Endothelial cell of umbilical vein (primary cell): ENCODE measurements at regions of chr2 and their contacts with region 1.

Region 1: GRCh38 chr2:172131713-172132555 is 29.2 kb upstream of the DLX2 start:
- DNase-seq: no peak
- H3K4me3 ChIP-seq: no peak overlapping the region
- H3K27ac ChIP-seq: no peak overlapping the region
- H3K4me1 ChIP-seq: no peaks in the 10 kb centered on the region
- H3K27me3 ChIP-seq: peaks cover 3% of the 10 kb centered on the region in 2 experiments
- CTCF ChIP-seq: no peak
- POLR2A ChIP-seq: no peak

Region 2: DNA sequence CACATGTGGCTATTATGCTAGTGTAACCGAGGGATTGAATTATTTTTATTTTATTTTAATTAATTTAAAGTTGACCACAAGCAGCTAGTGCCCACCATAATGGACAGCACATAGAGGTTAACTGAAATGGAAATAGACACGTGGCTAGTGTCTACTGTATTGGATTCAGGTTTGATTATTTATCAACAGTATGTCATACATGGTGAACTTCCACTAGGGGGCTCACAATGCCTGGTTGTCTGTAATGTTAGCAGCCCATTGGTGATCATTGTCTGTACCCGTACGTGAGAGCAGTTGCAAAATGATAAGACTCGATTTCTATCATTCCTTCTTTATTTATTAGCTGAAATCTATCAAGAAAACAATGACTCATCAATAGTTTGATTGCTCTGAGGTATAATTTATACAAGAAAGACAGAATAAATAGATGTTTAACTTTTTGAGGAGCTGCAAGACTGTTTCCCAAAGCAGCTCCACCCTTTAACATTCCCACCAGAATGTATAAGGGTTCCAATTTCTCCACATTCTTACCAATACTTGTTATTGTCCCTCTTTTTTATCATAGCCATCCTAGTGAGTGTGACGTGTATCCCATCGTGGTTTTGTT is 533.1 kb before region 1 on chr2:
- CTCF ChIA-PET with region 1: interaction called, 40 read pairs
- POLR2A ChIA-PET with region 1: no interaction called
- dilution Hi-C with region 1: no loop called
- intact Hi-C with region 1: loop called (anchors 1 kb)
- DNase-seq: peak; percentile 58
- H3K4me3 ChIP-seq: no peak overlapping the region
- H3K27ac ChIP-seq: no peak overlapping the region
- H3K4me1 ChIP-seq: no peaks in the 10 kb centered on the region
- H3K27me3 ChIP-seq: peaks cover 9 to 12% of the 10 kb centered on the region in 2 experiments
- CTCF ChIP-seq: peak; percentile 67 to 70
- POLR2A ChIP-seq: no peak

Region 3: DNA sequence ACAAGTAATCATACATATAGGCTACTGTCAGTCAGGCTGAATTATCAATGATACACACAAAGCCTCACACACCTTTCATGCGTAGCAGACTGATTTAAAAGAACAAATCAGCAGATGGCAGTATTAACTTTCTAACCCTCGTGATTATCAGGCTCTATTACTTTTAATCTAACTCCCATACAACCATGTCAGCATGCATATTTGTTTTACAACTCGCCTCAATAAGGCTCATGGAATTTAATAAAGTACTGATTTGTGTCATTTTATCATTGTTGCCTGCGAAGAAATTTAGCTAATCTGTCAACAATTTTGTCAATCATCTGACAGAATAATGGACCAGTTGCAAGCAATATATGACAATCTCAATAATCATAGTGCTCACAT is 320.7 kb before region 1 on chr2:
- CTCF ChIA-PET with region 1: interaction called, 32 read pairs
- POLR2A ChIA-PET with region 1: no interaction called
- dilution Hi-C with region 1: no loop called
- intact Hi-C with region 1: loop called (anchors 1 kb)
- DNase-seq: peak; percentile 61
- H3K4me3 ChIP-seq: no peak overlapping the region
- H3K27ac ChIP-seq: no peak overlapping the region
- H3K4me1 ChIP-seq: peaks cover 6% of the 10 kb centered on the region
- H3K27me3 ChIP-seq: no peaks in the 10 kb centered on the region
- CTCF ChIP-seq: peak in 1 of 2 donors; percentile 10
- POLR2A ChIP-seq: no peak

Region 4: DNA sequence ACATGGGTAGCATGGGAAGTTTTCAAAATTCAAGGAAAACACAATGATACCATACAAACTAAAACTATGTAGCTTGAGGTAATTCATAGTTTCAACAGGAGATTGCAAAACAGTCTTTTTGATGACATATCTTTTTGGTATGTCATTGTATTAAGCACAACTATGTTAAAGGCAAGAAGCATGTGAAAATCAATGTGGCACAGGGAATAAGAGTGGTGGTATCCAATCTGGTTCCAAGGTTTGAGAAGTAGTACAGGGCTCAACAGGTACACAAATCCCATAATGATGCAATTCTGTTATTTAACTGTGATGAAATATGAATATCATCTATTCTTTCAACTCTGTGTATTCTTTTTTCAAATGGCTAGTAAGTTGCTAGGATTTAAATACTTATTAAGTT is 12.8 kb before region 1 on chr2:
- CTCF ChIA-PET with region 1: interaction called, 63 read pairs
- POLR2A ChIA-PET with region 1: interaction called, 3 read pairs
- dilution Hi-C with region 1: no loop called
- intact Hi-C with region 1: no loop called
- DNase-seq: peak; percentile 30
- H3K4me3 ChIP-seq: no peak overlapping the region
- H3K27ac ChIP-seq: no peak overlapping the region
- H3K4me1 ChIP-seq: peaks cover 4% of the 10 kb centered on the region
- H3K27me3 ChIP-seq: peaks cover 2 to 4% of the 10 kb centered on the region in 2 experiments
- CTCF ChIP-seq: no peak
- POLR2A ChIP-seq: no peak

Region 5: GRCh38 chr2:172280571-172281361 is 148.8 kb after region 1 on chr2:
- CTCF ChIA-PET with region 1: no interaction called
- POLR2A ChIA-PET with region 1: no interaction called
- dilution Hi-C with region 1: no loop called
- intact Hi-C with region 1: no loop called
- DNase-seq: no peak
- H3K4me3 ChIP-seq: no peak overlapping the region
- H3K27ac ChIP-seq: no peak overlapping the region
- H3K4me1 ChIP-seq: peaks cover 40% of the 10 kb centered on the region
- H3K27me3 ChIP-seq: no peaks in the 10 kb centered on the region
- CTCF ChIP-seq: no peak
- POLR2A ChIP-seq: no peak

Region 6: DNA sequence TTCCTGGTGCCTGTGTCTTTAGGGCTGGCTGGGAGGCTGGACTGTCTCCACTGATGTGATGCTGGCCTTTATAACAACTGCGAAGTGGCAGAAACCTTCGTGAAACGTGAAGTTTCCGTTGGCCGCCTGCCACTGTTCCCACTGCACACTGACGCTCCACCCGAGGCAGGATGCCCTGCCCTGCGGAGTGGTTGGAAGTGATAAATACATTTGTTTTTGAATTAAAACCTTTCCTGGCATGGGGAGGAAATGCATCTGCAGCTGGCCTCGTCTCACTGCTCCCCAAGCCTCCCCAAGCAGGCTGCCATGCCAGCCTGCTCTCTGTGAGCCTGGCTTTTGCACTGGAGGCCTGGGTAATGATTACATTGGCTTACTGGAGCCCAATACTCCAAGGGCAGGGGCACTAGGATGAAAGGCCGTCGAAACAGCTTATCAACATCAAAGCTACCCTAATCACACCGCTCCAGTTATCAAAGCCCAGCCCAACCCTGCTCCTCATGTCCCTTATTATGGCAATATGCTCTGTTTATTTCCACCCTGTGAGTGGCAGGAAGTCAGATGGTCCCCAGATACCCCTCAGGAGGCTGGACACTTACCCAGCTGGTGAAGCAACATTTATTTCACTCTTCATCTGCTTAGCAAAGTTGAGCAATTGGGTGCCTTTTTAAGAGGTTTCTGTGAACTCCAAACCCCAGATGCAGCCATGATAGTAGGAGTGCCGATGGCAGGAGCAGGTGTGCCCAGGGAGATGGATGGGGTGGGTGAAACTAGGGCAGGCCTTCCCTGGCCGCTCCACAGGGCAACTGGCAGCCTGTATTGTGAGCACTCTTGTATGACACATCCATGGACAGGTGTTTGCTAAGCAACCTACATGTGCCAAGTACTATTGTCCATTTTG is 198.1 kb after region 1 on chr2:
- CTCF ChIA-PET with region 1: no interaction called
- POLR2A ChIA-PET with region 1: no interaction called
- dilution Hi-C with region 1: no loop called
- intact Hi-C with region 1: no loop called
- DNase-seq: peak; percentile 76
- H3K4me3 ChIP-seq: no peak overlapping the region
- H3K27ac ChIP-seq: no peak overlapping the region
- H3K4me1 ChIP-seq: peaks cover 9% of the 10 kb centered on the region
- H3K27me3 ChIP-seq: no peaks in the 10 kb centered on the region
- CTCF ChIP-seq: no peak
- POLR2A ChIP-seq: no peak

Region 7: GRCh38 chr2:172484253-172484652 is 352.3 kb after region 1 on chr2:
- CTCF ChIA-PET with region 1: interaction called, 17 read pairs
- POLR2A ChIA-PET with region 1: no interaction called
- dilution Hi-C with region 1: no loop called
- intact Hi-C with region 1: no loop called
- DNase-seq: peak; percentile 55
- H3K4me3 ChIP-seq: no peak overlapping the region
- H3K27ac ChIP-seq: no peak overlapping the region
- H3K4me1 ChIP-seq: peaks cover 22% of the 10 kb centered on the region
- H3K27me3 ChIP-seq: no peaks in the 10 kb centered on the region
- CTCF ChIP-seq: no peak
- POLR2A ChIP-seq: no peak